ENCODE measurements at regions of chr3 and their contacts with region 1.

Region 1: GRCh38 chr3:170699158-170700053 is 113.5 kb upstream of the SLC7A14 start:
- DNase-seq: no peak
- H3K4me3 ChIP-seq: no peak overlapping the region
- H3K27ac ChIP-seq: peak overlapping the region in 37 of 59 donors; percentile 0 to 75 (median 44)
- H3K27me3 ChIP-seq: no peaks in the 10 kb centered on the region
- CTCF ChIP-seq: no peak

Region 2: DNA sequence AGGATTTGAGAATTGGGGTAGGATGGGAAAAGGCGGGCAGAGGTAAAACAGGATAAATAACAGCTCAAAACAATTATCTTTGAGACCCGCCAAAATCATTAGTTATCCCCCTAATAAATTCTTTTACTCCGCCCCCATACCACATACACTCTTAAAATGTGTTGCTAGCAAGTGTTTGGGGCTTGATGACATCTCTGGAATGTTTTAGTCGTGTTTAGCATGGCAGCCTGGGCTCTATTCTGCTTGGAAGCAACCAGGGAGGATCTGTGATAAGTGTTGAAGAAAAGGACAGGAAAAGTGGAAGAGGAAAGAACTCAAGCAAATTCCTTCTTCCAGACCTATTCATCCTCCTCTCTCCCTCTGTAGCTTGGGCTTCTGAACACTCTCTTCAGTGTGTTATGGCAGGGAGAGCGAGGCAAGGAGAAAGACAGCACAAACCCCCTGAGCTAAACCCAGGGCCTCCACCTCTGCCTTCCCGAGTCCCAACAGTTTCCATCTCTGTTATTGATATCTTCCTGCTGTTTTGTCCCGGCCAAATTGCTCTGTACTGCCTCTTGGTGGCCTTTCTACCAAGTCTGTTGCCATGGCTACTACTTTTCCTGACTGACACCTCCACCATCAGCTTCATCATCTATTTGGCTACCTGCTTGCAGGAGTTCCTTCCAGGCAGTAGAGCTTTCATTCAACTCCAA is 34.8 kb after region 1 on chr3:
- intact Hi-C with region 1: loop called in 1 of 2 experiments (anchors 5 kb)
- DNase-seq: no peak
- H3K4me3 ChIP-seq: peak overlapping the region in 1 of 59 donors; percentile 4
- H3K27ac ChIP-seq: peak overlapping the region in 13 of 59 donors; percentile 2 to 76 (median 13)
- H3K27me3 ChIP-seq: no peaks in the 10 kb centered on the region
- CTCF ChIP-seq: no peak